WTC11 (cell line): ENCODE measurements at regions of chr16 and their contacts with region 1.

Region 1: GRCh38 chr16:66954097-66954659 is 6.9 kb upstream of the CES3 start:
- DNase-seq: peak; percentile 85
- ATAC-seq: peak; percentile 88
- H3K4me3 Mint-ChIP-seq: no peak overlapping the region
- H3K27ac Mint-ChIP-seq: no peak overlapping the region
- H3K4me1 Mint-ChIP-seq: peaks cover 4% of the 10 kb centered on the region
- H3K27me3 Mint-ChIP-seq: peaks cover 40% of the 10 kb centered on the region
- CTCF ChIP-seq: peak; percentile 62; the same call in 1 of the 2 replicates

Region 2: GRCh38 chr16:66608241-66609138 is 345.7 kb before region 1 on chr16:
- CTCF ChIA-PET with region 1: no interaction called
- POLR2A ChIA-PET with region 1: no interaction called
- DNase-seq: peak; percentile 94
- ATAC-seq: peak; percentile 54
- H3K4me3 Mint-ChIP-seq: no peak overlapping the region
- H3K27ac Mint-ChIP-seq: peak overlapping the region; percentile 84; the same call in 1 of the 2 replicates
- H3K4me1 Mint-ChIP-seq: peaks cover 26% of the 10 kb centered on the region
- H3K27me3 Mint-ChIP-seq: no peaks in the 10 kb centered on the region
- CTCF ChIP-seq: peak; percentile 75

Region 3: DNA sequence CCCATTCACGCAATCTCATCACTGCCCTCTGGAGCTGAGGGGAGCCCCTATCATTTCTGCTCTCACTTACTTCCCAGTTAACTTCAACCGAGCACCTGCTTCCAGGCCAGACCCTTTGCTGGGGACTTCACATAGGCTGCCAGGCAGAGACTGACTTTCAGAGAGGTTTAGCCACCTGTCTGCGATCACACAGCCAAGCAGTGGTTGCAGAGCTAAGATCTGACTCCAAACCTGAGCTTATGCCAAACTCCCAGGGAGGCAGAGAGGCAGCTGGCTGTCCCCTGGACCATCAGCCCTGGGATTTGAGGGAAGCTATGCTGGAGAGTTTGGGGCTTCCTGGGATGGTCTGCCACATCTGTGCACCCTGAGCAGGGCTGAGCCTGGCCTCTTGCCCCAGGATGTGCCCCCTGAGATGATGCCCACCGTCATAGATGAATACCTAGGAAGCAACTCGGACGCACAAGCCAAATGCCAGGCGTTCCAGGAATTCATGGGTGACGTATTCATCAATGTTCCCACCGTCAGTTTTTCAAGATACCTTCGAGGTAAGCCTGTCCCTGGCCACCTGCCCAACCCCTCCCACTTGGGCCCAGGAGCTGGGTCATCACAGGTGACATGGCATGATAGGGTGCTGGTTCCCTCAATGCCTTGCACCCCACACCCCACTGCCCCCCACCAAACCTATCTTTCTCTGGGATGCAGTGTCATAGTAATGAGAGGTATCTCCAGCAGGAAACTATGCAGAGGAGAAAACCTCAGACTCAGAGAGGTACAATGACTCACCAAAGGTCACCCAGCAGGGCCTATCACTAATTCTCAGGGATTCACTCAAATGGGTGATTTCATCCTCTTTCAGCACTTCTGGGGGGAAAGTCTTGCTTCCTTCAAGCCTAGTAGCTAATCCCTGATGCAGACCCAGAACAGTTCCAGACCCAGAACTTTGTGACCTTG is 16.9 kb after region 1 on chr16:
- CTCF ChIA-PET with region 1: interaction called, 27 read pairs
- POLR2A ChIA-PET with region 1: no interaction called
- DNase-seq: no peak
- ATAC-seq: no peak
- H3K4me3 Mint-ChIP-seq: no peak overlapping the region
- H3K27ac Mint-ChIP-seq: no peak overlapping the region
- H3K4me1 Mint-ChIP-seq: peaks cover 3% of the 10 kb centered on the region
- H3K27me3 Mint-ChIP-seq: no peaks in the 10 kb centered on the region; the same call in 1 of the 2 replicates
- CTCF ChIP-seq: no peak

Region 4: DNA sequence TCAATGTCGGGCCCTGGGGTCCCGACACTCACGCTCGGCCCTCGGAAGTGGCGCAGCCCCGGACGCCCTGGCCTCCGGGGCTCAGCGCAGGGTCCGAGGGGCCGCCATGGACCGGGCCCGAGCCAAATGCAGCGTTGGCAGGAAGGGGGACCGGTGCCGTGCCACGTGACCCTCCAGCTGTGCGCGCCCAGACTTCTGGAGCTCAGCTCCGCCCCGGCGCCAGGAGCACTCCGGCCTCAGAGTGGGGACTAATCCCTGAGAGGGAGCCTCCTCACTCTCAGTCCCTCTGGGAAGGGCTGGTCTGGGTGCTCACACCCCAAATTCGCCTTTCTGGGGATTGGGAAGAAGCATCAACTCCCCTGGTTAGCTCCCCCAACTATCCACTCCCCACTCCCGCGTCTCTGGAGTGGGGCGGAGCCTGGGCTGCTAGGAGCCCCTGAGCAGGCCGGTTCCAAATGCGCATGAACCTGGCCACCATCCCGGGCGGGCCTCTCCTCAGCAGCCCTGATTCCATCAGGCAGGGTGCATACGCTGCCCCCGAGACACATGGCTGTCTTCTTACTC is 196.7 kb after region 1 on chr16 and contains the start of gene B3GNT9:
- CTCF ChIA-PET with region 1: interaction called, 51 read pairs
- POLR2A ChIA-PET with region 1: interaction called, 3 read pairs
- DNase-seq: peak; percentile 77
- ATAC-seq: peak; percentile 36
- H3K4me3 Mint-ChIP-seq: peak within 1 kb of the TSS; percentile 75
- H3K27ac Mint-ChIP-seq: no peak within 1 kb of the TSS
- H3K4me1 Mint-ChIP-seq: peaks cover 8% of the 10 kb centered on the region
- H3K27me3 Mint-ChIP-seq: peaks cover 58% of the 10 kb centered on the region
- CTCF ChIP-seq: no peak
- total RNA-seq, gene B3GNT9: 6.4 to 7.8 TPM (median 7.6 TPM) in 3 replicates

Region 5: DNA sequence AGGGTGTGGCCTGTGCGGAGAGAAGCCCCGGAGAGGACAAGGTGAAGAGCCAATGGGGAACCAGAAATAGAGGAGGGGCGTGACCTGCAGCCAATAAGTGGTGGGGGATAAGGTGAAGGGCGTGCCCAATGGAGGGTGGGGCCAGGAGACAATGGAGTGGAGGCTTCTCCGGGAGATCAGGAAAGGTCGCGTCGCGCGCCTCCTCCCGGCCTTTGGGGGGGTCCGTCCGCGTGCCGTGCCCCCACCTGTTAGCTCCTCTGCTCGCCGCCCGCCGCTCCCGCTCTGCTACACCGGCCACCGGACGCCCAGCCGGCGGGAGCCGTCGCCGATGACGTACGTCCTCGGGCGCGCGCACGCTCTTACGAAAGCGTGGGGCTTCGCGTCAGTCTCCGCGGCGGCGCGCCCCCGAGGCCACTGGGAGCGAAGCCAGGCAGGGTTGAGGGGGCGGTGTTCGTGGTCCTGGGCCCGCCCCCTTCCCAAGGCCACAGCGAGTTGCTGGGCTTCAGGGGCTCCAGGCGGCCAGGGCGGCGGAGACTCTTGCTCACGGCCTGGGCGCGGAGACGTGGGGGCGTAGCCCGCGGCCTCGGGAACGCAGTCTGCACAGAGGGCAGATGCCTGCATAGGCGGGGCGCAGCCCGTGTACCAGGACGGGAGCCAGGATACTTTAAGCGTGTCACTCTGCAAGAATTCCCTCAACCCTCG is 229.6 kb after region 1 on chr16 and contains the start of gene MATCAP1:
- CTCF ChIA-PET with region 1: interaction called, 30 read pairs
- POLR2A ChIA-PET with region 1: no interaction called
- DNase-seq: peak; percentile 94
- ATAC-seq: peak; percentile 90
- H3K4me3 Mint-ChIP-seq: peak within 1 kb of the TSS; percentile 82
- H3K27ac Mint-ChIP-seq: no peak within 1 kb of the TSS
- H3K4me1 Mint-ChIP-seq: peaks cover 20% of the 10 kb centered on the region
- H3K27me3 Mint-ChIP-seq: peaks cover 31% of the 10 kb centered on the region
- CTCF ChIP-seq: no peak
- total RNA-seq, gene MATCAP1: 40.8 to 54.3 TPM (median 50.5 TPM) in 3 replicates